Activated CD4-positive, alpha-beta T cell treated with anti-CD3 and anti-CD28 coated beads, Interleukin-2, amount 10 ng/mL, durations not matched to agents 7 days and 5 days (primary cell): ENCODE measurements at regions of chr14 and their contacts with region 1.

Region 1: GRCh38 chr14:22570132-22570949 is 18.7 kb downstream of the DAD1 start:
- DNase-seq: peak; percentile 94
- H3K4me3 Mint-ChIP-seq: peak overlapping the region; percentile 78
- H3K27ac Mint-ChIP-seq: peak overlapping the region; percentile 97
- H3K4me1 Mint-ChIP-seq: peaks cover 68% of the 10 kb centered on the region
- H3K27me3 Mint-ChIP-seq: no peaks in the 10 kb centered on the region

Region 2: GRCh38 chr14:21917699-21918436 is 652.5 kb before region 1 on chr14:
- CTCF ChIA-PET with region 1: interaction called, 27 read pairs
- POLR2A ChIA-PET with region 1: interaction called, 3 read pairs
- DNase-seq: peak; percentile 81
- H3K4me3 Mint-ChIP-seq: peak overlapping the region; percentile 72
- H3K27ac Mint-ChIP-seq: peak overlapping the region; percentile 78
- H3K4me1 Mint-ChIP-seq: peaks cover 77% of the 10 kb centered on the region
- H3K27me3 Mint-ChIP-seq: no peaks in the 10 kb centered on the region

Region 3: DNA sequence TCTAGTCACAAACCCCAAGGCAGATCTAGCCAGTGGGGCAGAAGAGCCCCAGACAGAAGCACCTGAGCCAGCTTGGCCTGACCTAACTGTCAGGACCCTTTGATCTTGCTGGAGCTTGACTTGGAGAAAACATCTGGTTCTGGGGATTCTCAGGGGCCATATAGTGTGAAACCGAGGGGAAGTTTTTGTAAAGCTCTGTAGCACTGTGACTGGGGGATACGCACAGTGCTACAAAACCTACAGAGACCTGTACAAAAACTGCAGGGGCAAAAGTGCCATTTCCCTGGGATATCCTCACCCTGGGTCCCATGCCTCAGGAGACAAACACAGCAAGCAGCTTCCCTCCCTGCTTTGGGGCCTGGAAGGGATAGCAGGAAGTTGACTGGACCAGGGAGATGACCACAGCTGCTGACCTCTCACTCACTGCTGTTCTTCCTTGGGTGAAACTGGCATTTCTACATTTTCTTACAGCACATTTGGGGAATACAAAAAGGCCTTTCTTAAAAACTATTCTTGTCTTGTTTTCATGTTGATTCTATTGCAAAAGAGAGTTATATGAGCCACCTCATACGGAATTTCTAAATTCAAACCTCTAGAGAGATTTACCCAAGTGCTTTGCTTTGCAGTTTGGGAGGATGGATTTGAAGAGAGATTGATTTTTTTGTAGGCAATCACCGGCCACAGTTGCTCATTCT is 121.3 kb before region 1 on chr14:
- CTCF ChIA-PET with region 1: no interaction called
- POLR2A ChIA-PET with region 1: no interaction called
- DNase-seq: no peak
- H3K4me3 Mint-ChIP-seq: no peak overlapping the region
- H3K27ac Mint-ChIP-seq: no peak overlapping the region
- H3K4me1 Mint-ChIP-seq: no peaks in the 10 kb centered on the region
- H3K27me3 Mint-ChIP-seq: no peaks in the 10 kb centered on the region

Region 4: GRCh38 chr14:22505697-22506377 is 64.5 kb before region 1 on chr14:
- CTCF ChIA-PET with region 1: interaction called, 18 read pairs
- POLR2A ChIA-PET with region 1: interaction called, 3 read pairs
- DNase-seq: no peak
- H3K4me3 Mint-ChIP-seq: peak overlapping the region; percentile 85
- H3K27ac Mint-ChIP-seq: peak overlapping the region; percentile 96
- H3K4me1 Mint-ChIP-seq: peaks cover 66% of the 10 kb centered on the region
- H3K27me3 Mint-ChIP-seq: no peaks in the 10 kb centered on the region

Region 5: GRCh38 chr14:22549981-22550673 is 20.2 kb before region 1 on chr14:
- CTCF ChIA-PET with region 1: interaction called, 335 read pairs
- POLR2A ChIA-PET with region 1: interaction called, 6 read pairs
- DNase-seq: peak; percentile 71
- H3K4me3 Mint-ChIP-seq: peak overlapping the region; percentile 68
- H3K27ac Mint-ChIP-seq: peak overlapping the region; percentile 94
- H3K4me1 Mint-ChIP-seq: peaks cover 92% of the 10 kb centered on the region
- H3K27me3 Mint-ChIP-seq: no peaks in the 10 kb centered on the region

Region 6: DNA sequence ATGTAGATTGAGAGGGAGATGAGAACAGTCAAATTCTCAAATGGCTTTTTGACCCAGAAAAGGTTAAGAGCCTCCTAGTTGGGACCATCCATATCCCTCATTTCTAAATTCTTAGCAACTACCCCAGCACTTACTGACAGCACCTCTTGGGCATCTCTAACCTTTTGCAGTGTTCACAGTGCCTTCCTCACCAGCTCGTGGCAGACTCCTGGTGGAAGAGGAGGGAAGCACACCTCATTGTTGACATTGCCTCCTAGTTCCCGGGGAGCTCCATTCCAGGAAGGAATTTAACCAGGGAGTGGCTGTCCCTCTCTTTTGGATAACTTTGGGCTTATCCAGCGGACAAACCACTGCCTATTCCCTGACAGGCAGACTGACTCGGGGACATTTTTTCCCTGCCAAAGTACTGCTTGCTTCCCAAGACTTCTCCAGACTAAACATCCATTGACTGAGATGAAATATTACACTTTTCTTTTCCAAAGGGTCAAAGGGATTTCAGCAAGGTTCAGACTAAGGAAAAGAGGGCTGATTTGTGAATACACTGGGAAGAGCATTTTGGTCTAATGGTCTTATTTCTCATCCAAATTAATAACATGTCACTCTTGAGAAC is 82.8 kb after region 1 on chr14:
- CTCF ChIA-PET with region 1: interaction called, 43 read pairs
- POLR2A ChIA-PET with region 1: interaction called, 4 read pairs
- DNase-seq: peak; percentile 64
- H3K4me3 Mint-ChIP-seq: no peak overlapping the region
- H3K27ac Mint-ChIP-seq: no peak overlapping the region
- H3K4me1 Mint-ChIP-seq: peaks cover 9% of the 10 kb centered on the region
- H3K27me3 Mint-ChIP-seq: no peaks in the 10 kb centered on the region

Region 7: GRCh38 chr14:22822571-22823098 is 252.3 kb after region 1 on chr14:
- CTCF ChIA-PET with region 1: interaction called, 24 read pairs
- POLR2A ChIA-PET with region 1: no interaction called
- DNase-seq: peak; percentile 60
- H3K4me3 Mint-ChIP-seq: peak overlapping the region; percentile 37
- H3K27ac Mint-ChIP-seq: no peak overlapping the region
- H3K4me1 Mint-ChIP-seq: peaks cover 35% of the 10 kb centered on the region
- H3K27me3 Mint-ChIP-seq: peaks cover 17% of the 10 kb centered on the region

Region 8: GRCh38 chr14:22900081-22900799 is 329.9 kb after region 1 on chr14:
- CTCF ChIA-PET with region 1: interaction called, 12 read pairs
- POLR2A ChIA-PET with region 1: no interaction called
- DNase-seq: peak; percentile 75
- H3K4me3 Mint-ChIP-seq: no peak overlapping the region
- H3K27ac Mint-ChIP-seq: peak overlapping the region; percentile 7
- H3K4me1 Mint-ChIP-seq: peaks cover 23% of the 10 kb centered on the region
- H3K27me3 Mint-ChIP-seq: no peaks in the 10 kb centered on the region